ENCODE measurements at regions of chr3 and their contacts with region 1.

Region 1: GRCh38 chr3:152109038-152109437 is 159.7 kb upstream of the MBNL1 start:
- DNase-seq: no peak
- CTCF ChIP-seq: no peak

Region 2: GRCh38 chr3:152097770-152098169 is 11.3 kb before region 1 on chr3:
- CTCF ChIA-PET with region 1: interaction called, 12 read pairs
- POLR2A ChIA-PET with region 1: no interaction called
- DNase-seq: no peak
- CTCF ChIP-seq: no peak

Measured in GM10248 (cell line).